ENCODE measurements at regions of chr20 and their contacts with region 1.

Region 1: GRCh38 chr20:23139524-23139923 is 53.4 kb upstream of the CD93 start:
- DNase-seq: no peak
- ATAC-seq: no peak
- H3K4me3 ChIP-seq: no peak overlapping the region
- H3K4me3 Mint-ChIP-seq: no peak overlapping the region
- H3K27ac ChIP-seq: no peak overlapping the region
- H3K27ac Mint-ChIP-seq: no peak overlapping the region
- H3K4me1 ChIP-seq: no peaks in the 10 kb centered on the region
- H3K4me1 Mint-ChIP-seq: peaks cover 7% of the 10 kb centered on the region
- H3K27me3 ChIP-seq: no peaks in the 10 kb centered on the region
- H3K27me3 Mint-ChIP-seq: no peaks in the 10 kb centered on the region
- CTCF ChIP-seq: no peak

Region 2: DNA sequence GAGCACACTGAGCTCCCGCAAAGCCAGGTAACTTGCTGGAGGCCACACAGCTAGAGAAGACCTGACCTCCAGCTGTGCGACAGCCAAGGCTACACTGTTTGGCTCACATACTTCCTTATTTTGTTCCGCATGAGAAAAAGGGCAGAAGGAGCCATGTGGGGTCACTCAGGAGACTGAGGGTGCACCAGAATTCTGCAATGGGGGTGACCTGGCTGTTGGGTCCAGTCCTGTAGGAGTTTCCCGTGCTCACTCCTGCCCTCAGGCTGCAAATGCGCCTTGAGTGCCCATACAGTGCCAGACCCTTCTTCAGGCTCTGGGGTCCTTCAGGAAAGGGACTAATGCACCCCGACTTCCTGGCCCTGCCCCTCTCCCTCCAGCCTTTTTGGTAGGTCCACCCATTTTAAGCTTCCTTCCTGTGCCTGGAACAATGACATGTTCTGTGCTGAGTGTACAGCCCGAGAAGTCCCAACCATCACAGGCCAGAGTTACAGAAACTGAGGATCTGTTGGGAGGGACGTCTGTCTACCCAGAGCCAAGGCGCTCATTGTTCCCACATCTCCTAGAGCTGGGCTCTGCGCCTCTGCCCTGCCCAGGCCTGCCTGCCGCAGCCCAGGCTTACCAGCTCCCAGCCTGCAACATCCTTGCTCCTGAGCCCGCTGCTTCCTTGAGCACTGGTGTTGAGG is 19.9 kb before region 1 on chr20:
- CTCF ChIA-PET with region 1: no interaction called
- POLR2A ChIA-PET with region 1: no interaction called
- intact Hi-C with region 1: loop called in 1 of 2 experiments (anchors 2 kb)
- DNase-seq: no peak
- ATAC-seq: no peak
- H3K4me3 ChIP-seq: no peak overlapping the region
- H3K4me3 Mint-ChIP-seq: no peak overlapping the region
- H3K27ac ChIP-seq: no peak overlapping the region
- H3K27ac Mint-ChIP-seq: no peak overlapping the region
- H3K4me1 ChIP-seq: no peaks in the 10 kb centered on the region
- H3K4me1 Mint-ChIP-seq: no peaks in the 10 kb centered on the region
- H3K27me3 ChIP-seq: no peaks in the 10 kb centered on the region
- H3K27me3 Mint-ChIP-seq: peaks cover 4% of the 10 kb centered on the region
- CTCF ChIP-seq: no peak